ENCODE measurements at regions of chr19 and their contacts with region 1.

Region 1: DNA sequence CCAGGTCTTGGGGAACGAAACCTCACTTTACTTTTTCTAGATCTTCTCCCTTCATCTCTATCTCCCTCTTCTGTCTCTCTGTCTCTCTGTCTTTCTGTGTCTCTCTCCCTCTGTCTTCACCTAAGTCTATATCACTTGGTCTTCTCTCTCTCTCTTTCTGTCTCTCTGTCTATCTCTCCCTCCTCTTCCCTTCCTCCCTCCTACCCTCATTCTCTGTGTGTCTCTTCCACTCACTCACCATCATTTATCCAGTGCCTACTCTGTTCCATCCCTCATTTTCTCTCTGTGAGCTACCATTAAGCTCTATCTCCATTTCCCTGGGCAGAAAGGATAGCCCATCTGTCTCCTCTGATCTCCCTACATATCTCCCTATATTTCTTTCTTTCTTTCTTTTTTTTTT is 32.2 kb upstream of the FBL start:
- DNase-seq: no peak
- ATAC-seq: no peak
- H3K4me3 ChIP-seq: no peak overlapping the region
- H3K27ac ChIP-seq: no peak overlapping the region
- H3K4me1 ChIP-seq: no peaks in the 10 kb centered on the region
- H3K27me3 ChIP-seq: no peaks in the 10 kb centered on the region
- CTCF ChIP-seq: no peak

Region 2: GRCh38 chr19:39906820-39907611 is 28.6 kb after region 1 on chr19:
- CTCF ChIA-PET with region 1: no interaction called
- POLR2A ChIA-PET with region 1: interaction called, 14 read pairs
- in situ Hi-C with region 1: no loop called
- intact Hi-C with region 1: no loop called
- DNase-seq: no peak
- ATAC-seq: no peak
- H3K4me3 ChIP-seq: no peak overlapping the region
- H3K27ac ChIP-seq: no peak overlapping the region
- H3K4me1 ChIP-seq: no peaks in the 10 kb centered on the region
- H3K27me3 ChIP-seq: peaks cover 3% of the 10 kb centered on the region; the same call in 1 of the 2 replicates
- CTCF ChIP-seq: no peak

Region 3: DNA sequence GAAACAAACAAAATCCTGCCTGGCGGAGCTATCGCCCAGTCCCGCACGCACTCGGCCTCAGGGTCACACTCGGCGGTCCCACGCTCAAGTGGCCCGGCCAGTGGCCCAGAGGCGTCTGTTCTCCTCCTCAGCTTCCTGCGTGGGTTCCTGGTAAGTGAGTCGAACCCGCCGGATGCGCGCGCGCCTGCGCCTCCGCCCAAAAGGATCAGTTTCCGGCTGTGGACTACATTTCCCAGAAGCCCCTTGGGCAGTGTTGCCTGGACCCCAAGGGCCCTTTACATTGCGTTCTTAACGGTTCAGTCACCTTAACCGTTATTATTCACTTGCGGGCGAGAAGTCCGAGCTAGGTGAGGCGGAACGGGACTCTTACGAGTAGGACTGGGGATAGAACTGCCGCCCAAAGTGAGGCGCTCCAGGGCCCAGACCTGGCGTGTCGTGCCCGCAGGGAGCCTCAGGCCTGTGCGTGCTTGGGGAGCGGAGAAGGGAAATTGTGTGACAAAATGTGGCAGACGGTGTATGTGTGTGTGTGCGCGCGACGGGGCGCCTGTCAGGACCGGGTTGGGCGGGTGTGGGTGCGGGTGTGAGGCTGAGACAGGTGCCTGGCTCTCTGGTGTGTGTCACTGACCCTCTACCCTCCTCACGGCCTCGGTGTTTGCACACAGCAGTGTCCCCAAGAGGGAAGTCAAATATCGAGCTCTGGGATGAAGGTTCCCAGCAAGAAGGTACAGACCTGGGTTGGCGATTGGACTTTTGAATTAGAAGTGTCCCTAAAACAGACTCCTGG is 118.6 kb after region 1 on chr19 and contains the start of gene ZNF546:
- CTCF ChIA-PET with region 1: no interaction called
- POLR2A ChIA-PET with region 1: interaction called, 10 read pairs
- in situ Hi-C with region 1: no loop called
- intact Hi-C with region 1: no loop called
- DNase-seq: peak; percentile 100
- ATAC-seq: peak; percentile 98
- H3K4me3 ChIP-seq: peak within 1 kb of the TSS; percentile 35 to 49
- H3K27ac ChIP-seq: peak within 1 kb of the TSS; percentile 83
- H3K4me1 ChIP-seq: peaks cover 19% of the 10 kb centered on the region
- H3K27me3 ChIP-seq: no peaks in the 10 kb centered on the region
- CTCF ChIP-seq: no peak
- total RNA-seq, gene ZNF546: 68.4 TPM

Region 4: GRCh38 chr19:40035996-40036395 is 157.6 kb after region 1 on chr19:
- CTCF ChIA-PET with region 1: no interaction called
- POLR2A ChIA-PET with region 1: no interaction called
- in situ Hi-C with region 1: no loop called
- intact Hi-C with region 1: no loop called
- DNase-seq: no peak
- ATAC-seq: no peak
- H3K4me3 ChIP-seq: no peak overlapping the region
- H3K27ac ChIP-seq: no peak overlapping the region
- H3K4me1 ChIP-seq: no peaks in the 10 kb centered on the region
- H3K27me3 ChIP-seq: no peaks in the 10 kb centered on the region
- CTCF ChIP-seq: peak; percentile 19; the same call in 1 of the 2 replicates

Region 5: DNA sequence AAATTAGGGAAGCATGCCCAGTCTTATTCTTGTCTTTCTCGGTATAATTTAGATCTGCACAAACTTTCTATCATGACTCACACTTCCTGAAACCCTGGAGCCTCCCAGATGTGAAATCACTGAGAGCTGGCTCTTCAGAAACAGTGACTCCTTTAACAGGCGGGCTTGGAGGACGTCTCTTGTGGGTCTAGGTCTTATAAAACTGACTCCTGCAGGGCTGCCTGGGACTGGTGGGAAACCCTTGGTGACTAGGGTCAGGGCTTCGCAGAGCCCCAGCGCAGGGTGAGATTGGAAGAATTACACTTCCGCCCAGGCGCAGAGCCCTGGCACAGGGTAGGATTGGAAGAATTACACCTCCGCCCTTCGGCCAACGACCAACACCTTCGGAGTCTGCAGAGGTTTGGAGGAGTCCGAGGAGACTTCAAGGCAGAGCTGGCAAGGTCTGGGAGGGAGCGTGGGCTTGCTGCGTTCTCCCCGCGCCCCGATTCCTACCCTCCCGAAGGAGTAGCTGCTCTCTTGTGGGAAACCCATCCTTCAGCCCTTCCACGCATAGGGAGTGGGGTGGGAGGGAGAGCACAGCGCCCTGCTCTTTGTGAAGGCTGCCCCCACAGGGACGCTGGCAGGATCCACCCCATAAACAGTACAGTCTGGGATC is 269.4 kb after region 1 on chr19:
- CTCF ChIA-PET with region 1: interaction called, 11 read pairs
- POLR2A ChIA-PET with region 1: no interaction called
- in situ Hi-C with region 1: no loop called
- intact Hi-C with region 1: no loop called
- DNase-seq: peak; percentile 100
- ATAC-seq: peak; percentile 87
- H3K4me3 ChIP-seq: peak overlapping the region; percentile 24 to 50
- H3K27ac ChIP-seq: peak overlapping the region; percentile 42
- H3K4me1 ChIP-seq: peaks cover 14% of the 10 kb centered on the region
- H3K27me3 ChIP-seq: no peaks in the 10 kb centered on the region
- CTCF ChIP-seq: no peak

Region 6: GRCh38 chr19:40200341-40201099 is 322.1 kb after region 1 on chr19:
- CTCF ChIA-PET with region 1: interaction called, 13 read pairs
- POLR2A ChIA-PET with region 1: no interaction called
- in situ Hi-C with region 1: no loop called
- intact Hi-C with region 1: no loop called
- DNase-seq: no peak
- ATAC-seq: peak; percentile 7; the same call in 1 of the 2 replicates
- H3K4me3 ChIP-seq: no peak overlapping the region
- H3K27ac ChIP-seq: no peak overlapping the region
- H3K4me1 ChIP-seq: no peaks in the 10 kb centered on the region
- H3K27me3 ChIP-seq: no peaks in the 10 kb centered on the region
- CTCF ChIP-seq: no peak